Left cardiac atrium (tissue), 4 donors: ENCODE measurements at regions of chr1 and their contacts with region 1.

Region 1: GRCh38 chr1:11805447-11806306 is at the starts of genes CLCN6 and MTHFR:
- DNase-seq: peak; percentile 100
- ATAC-seq: peak; percentile 88 to 89
- total RNA-seq, gene CLCN6: 32.1 to 49.0 TPM
- total RNA-seq, gene MTHFR: 40.1 to 64.3 TPM

Region 2: GRCh38 chr1:11790880-11791715 is 14.6 kb before region 1 on chr1:
- intact Hi-C with region 1: loop called in 1 of 2 experiments (anchors 2 kb)
- DNase-seq: peak; percentile 95
- ATAC-seq: peak; percentile 84 to 87

Region 3: DNA sequence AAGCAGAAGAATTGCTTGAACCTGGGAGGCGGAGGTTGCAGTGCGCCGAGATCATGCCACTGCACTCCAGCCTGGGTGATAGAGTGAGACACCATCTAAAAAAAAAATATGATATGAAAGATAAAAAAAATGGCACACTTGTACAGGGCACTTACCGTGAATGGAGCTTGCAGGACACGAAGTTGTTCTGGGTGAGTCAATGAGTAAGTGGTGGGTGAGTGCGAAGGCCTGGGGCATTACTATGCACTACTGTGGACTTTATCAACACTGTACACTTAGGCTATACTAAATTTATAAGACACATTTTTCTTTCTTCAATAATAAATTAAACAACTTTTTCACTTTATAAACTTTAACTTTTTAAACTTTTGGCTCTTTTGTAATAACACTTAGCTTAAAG is 294.4 kb after region 1 on chr1:
- intact Hi-C with region 1: no loop called
- DNase-seq: no peak
- ATAC-seq: no peak